MCF 10A (cell line): ENCODE measurements at regions of chr1 and their contacts with region 1.

Region 1: DNA sequence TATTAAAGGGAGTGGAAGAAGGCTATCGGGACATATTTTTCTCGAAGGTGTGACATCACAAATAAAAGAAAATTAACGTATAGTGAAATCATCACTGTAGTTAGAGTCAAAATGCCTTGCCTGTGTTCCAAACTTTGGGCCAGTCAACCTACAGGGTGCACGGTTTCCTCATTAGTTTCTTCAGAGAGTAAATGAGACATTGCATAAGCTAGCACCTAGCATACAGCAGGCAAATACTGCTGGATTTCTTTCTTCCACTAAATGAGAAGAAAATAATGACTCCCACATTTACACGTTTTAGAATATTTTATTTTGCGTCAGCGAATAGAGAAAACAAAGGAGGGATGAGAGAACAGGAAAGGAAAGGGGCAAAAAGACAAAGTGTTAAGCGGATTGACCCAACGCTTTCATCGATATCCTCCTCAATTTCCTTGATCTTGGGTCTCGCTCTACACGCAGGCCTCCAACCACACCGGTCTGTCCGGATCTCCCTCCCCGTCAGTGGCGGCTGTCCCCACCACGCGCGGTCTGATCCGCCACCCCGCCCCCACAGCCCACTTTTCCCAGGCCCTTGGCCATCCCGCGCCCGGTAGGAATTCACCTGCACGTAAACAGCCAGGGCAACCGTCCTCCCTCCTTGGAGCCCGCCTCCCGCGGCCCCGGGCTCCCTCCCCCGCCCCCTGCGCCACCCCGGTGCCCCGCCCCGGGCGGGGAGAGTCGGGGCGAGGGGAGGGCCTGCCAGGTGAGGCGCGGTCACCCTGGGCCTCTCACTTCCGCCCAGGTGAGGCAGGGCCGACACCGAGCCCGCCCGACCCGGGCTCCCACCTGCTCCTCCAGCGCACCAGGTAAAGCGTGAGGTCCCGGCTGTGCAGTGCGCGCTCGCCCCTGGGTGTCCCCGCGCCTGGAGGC is at the start of gene PATJ:
- DNase-seq: peak; percentile 86
- H3K4me3 Mint-ChIP-seq: peak within 1 kb of the TSS; percentile 82
- H3K27ac Mint-ChIP-seq: peak within 1 kb of the TSS; percentile 78
- H3K4me1 Mint-ChIP-seq: peaks cover 21% of the 10 kb centered on the region
- H3K27me3 Mint-ChIP-seq: no peaks in the 10 kb centered on the region
- CTCF ChIP-seq: no peak
- total RNA-seq, gene PATJ: 28.7 and 30.6 TPM in 2 replicates

Region 2: DNA sequence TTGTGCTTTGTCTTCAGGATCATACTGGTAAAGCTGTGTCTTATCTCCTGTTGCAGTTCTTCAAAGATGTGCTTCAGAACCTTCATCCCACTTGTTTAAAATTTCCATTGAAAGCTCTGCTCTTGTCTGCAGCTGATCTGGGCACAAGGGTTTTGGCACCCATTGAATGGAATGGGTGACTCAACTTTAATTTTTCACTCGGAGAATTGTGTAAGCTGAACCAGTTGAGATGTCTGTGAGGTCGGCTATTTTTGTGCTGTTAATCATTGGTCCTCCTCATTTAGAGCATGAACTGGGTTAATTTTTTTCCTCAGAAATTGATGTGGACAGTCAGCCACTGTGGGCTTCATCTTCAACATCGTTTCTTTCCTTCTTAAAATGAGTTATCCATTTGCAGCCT is 269.1 kb before region 1 on chr1:
- CTCF ChIA-PET with region 1: no interaction called
- POLR2A ChIA-PET with region 1: no interaction called
- intact Hi-C with region 1: loop called (anchors 5 kb)
- DNase-seq: peak; percentile 79
- H3K4me3 Mint-ChIP-seq: no peak overlapping the region
- H3K27ac Mint-ChIP-seq: no peak overlapping the region
- H3K4me1 Mint-ChIP-seq: peaks cover 15% of the 10 kb centered on the region
- H3K27me3 Mint-ChIP-seq: no peaks in the 10 kb centered on the region
- CTCF ChIP-seq: no peak

Region 3: DNA sequence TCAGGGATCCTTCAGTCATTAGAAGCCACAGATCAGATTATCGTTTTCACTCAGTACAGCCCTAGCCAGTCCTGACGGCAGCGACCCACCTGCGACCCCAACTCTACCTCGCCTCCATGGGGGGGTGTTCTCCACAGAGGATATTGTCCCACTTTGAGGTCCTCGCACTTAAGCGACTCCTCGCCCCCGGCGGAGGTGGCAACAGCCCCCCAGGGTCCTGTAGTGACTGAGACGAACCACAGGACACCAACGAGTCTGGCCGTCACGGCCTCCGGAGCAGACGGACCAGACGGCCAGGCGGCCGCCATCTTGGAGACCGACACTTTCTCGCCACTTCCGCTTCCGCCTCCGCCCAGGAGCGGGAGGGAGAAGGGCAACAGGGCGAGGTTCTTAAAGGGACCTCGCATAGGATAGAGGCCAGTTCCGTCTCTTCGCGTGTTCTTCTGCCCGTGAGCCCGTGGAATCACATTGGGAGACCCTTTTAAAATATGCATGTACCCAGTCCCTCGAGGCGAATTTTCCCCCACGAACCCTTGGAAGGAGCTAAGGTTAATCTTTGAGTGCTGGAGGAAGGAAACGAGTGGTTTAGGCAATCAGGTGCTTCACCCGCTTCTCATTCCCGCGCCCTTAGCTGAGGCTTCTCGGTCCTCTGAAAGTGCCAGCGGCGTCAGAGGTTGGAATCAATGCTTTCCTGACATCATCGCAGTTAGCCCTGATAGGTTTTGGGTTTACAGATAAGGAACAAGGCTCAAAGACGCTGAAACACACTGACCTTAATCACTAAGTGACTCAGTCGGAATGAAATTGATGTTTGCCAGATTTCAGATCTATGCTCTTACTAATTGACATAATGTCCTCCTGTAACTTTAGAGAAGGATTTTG is 16.9 kb before region 1 on chr1 and contains the start of gene TM2D1:
- CTCF ChIA-PET with region 1: interaction called, 4 read pairs
- POLR2A ChIA-PET with region 1: interaction called, 19 read pairs
- intact Hi-C with region 1: no loop called
- DNase-seq: peak; percentile 92
- H3K4me3 Mint-ChIP-seq: peak within 1 kb of the TSS; percentile 100
- H3K27ac Mint-ChIP-seq: peak within 1 kb of the TSS; percentile 100
- H3K4me1 Mint-ChIP-seq: peaks cover 11% of the 10 kb centered on the region
- H3K27me3 Mint-ChIP-seq: no peaks in the 10 kb centered on the region
- CTCF ChIP-seq: no peak
- total RNA-seq, gene TM2D1: 29.4 and 36.4 TPM in 2 replicates

Region 4: GRCh38 chr1:61754545-61754944 is 12.6 kb after region 1 on chr1:
- CTCF ChIA-PET with region 1: no interaction called
- POLR2A ChIA-PET with region 1: interaction called, 15 read pairs
- intact Hi-C with region 1: no loop called
- DNase-seq: peak; percentile 66
- H3K4me3 Mint-ChIP-seq: no peak overlapping the region
- H3K27ac Mint-ChIP-seq: peak overlapping the region; percentile 39
- H3K4me1 Mint-ChIP-seq: no peaks in the 10 kb centered on the region
- H3K27me3 Mint-ChIP-seq: no peaks in the 10 kb centered on the region
- CTCF ChIP-seq: no peak

Region 5: DNA sequence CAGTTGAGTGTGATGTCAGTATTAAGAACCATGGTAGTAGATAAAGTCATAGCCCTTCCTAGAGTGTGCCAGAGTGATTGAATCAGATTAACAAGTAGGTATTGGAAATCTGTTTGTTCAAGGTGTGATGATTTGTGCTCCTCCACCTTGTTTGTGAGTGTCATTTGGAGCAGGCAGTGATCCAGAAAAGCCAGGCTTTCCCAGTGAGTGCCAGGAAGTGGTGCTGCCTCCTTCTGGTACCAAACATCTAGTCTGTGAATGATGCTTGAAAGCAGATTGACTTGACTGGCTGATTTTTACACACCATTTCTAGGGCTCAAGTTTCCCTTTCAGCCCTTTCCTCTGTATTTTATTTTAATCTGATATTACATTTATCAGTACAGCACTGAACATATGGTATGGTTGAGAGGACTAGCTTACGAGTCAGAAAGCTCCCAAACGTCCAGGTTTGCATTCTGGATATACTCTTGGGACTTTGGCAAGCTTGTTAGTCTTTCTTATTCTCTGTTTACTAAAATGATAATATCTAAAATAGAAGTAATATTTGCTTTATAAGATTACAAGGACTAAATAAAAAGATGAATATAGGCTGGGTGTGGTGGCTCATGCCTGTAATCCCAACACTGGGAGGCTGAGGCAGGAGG is 101.0 kb after region 1 on chr1:
- CTCF ChIA-PET with region 1: no interaction called
- POLR2A ChIA-PET with region 1: no interaction called
- intact Hi-C with region 1: loop called (anchors 5 kb)
- DNase-seq: peak; percentile 9
- H3K4me3 Mint-ChIP-seq: no peak overlapping the region
- H3K27ac Mint-ChIP-seq: no peak overlapping the region
- H3K4me1 Mint-ChIP-seq: peaks cover 6% of the 10 kb centered on the region
- H3K27me3 Mint-ChIP-seq: no peaks in the 10 kb centered on the region
- CTCF ChIP-seq: no peak